ENCODE measurements at regions of chr2 and their contacts with region 1.

Region 1: DNA sequence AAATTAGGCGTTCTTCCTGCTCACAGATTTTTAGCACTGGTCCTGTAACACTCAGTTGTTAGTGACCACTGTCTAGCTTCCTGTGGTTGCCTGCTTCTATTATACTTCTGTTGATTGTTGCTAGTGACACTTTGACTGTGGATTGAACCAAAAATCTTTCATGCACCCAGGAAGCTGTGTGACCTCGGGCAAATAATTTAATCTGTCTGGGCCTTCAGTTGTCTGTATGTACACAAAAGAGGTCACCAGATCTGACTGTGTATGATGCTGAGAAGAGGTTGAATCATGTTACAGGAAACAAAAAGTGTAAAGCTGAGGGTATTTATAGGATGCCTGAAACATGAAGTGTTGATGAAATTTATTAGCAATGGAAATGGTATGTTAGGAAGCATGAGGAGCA is 12.7 kb downstream of the ICOS start:
- DNase-seq: peak; percentile 31
- H3K4me3 Mint-ChIP-seq: peak overlapping the region; percentile 33
- H3K27ac Mint-ChIP-seq: peak overlapping the region; percentile 82
- H3K4me1 Mint-ChIP-seq: peaks cover 91% of the 10 kb centered on the region
- H3K27me3 Mint-ChIP-seq: no peaks in the 10 kb centered on the region

Region 2: DNA sequence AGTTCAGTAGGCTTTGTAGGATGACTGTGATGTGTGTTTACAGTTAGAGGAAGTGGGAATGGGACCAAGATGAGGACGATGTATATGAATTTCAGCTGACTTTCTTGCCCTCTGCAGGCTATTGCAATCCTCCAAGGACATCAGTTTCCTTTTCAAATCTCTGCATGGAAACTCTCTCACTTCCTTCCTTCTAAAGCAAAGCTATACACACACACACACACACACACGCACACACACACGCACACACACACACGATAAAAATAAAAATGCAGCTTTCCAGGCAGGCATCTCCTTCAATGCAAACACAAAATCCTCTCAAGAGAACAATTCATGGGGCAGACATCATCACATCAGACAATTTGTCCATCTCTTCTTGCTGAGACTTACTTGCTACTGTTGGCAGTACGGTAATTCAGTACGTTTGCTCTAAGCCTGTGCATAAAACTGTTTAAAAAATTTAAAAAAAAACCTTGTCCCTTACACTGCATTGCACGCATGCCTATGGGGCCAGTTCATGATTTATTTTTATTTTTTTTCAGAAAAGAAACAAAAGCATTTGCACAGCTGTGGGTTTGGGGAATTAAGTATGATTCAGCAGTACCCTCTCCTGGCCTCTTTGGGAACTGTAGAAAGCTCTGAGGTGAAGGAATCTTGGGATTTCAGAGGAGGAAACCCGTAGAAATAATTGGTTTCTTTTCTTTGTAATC is 39.8 kb before region 1 on chr2:
- CTCF ChIA-PET with region 1: no interaction called
- POLR2A ChIA-PET with region 1: no interaction called
- DNase-seq: peak; percentile 47
- H3K4me3 Mint-ChIP-seq: peak overlapping the region; percentile 17
- H3K27ac Mint-ChIP-seq: peak overlapping the region; percentile 80
- H3K4me1 Mint-ChIP-seq: peaks cover 27% of the 10 kb centered on the region
- H3K27me3 Mint-ChIP-seq: no peaks in the 10 kb centered on the region

Region 3: GRCh38 chr2:203993560-203993959 is 44.3 kb after region 1 on chr2:
- CTCF ChIA-PET with region 1: interaction called, 10 read pairs
- POLR2A ChIA-PET with region 1: no interaction called
- DNase-seq: no peak
- H3K4me3 Mint-ChIP-seq: no peak overlapping the region
- H3K27ac Mint-ChIP-seq: no peak overlapping the region
- H3K4me1 Mint-ChIP-seq: peaks cover 37% of the 10 kb centered on the region
- H3K27me3 Mint-ChIP-seq: no peaks in the 10 kb centered on the region